BJ (cell line): ENCODE measurements at regions of chr2 and their contacts with region 1.

Region 1: GRCh38 chr2:1817256-1818051 is 73.1 kb upstream of the PXDN start:
- DNase-seq: peak; percentile 97
- H3K4me3 ChIP-seq: no peak overlapping the region
- H3K27me3 ChIP-seq: no peaks in the 10 kb centered on the region
- CTCF ChIP-seq: peak; percentile 99

Region 2: GRCh38 chr2:1730015-1730927 is 87.2 kb before region 1 on chr2:
- CTCF ChIA-PET with region 1: interaction called, 14 read pairs
- POLR2A ChIA-PET with region 1: interaction called, 3 read pairs
- DNase-seq: peak; percentile 83
- H3K4me3 ChIP-seq: no peak overlapping the region
- H3K27me3 ChIP-seq: no peaks in the 10 kb centered on the region
- CTCF ChIP-seq: no peak

Region 3: DNA sequence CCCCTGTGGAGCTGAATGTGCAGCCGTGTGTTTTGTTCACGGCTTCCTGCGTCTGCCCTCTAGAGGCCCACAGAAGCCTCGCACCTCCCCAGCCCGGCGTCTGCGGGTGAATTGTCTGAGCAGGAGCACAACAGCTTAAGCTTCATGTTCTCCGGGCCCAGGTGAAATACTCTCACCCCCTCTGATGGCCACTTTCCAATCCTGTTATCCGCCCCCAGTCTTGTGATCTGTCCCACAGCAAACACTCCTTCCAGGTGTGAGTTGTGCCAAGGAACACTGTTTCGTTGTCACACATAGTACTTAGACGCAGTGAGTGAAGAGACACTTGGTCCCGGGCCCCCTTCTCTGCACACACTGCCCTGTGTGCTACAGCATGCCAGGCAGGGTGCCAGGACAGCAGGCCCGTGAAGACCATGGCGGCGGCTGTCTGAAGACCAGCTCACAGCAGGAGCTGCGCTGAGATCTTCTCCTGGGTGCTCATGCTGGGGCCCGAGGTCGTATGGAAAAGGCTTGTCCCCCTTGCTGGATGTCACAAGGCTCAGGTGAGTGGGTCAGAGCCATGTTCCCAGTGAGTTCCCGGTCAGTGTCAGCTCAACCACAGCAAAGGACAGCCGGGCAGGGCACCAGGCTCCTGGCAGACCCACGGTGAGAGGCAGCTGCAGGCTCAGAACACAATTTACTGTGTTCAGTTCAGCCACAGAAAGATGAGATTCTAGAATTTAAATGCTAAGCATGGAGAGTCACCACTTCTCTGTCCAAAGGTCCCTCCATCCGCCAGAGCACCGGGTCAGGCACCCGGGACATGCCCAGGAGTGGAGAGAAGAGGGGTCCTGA is 66.3 kb before region 1 on chr2:
- CTCF ChIA-PET with region 1: interaction called, 24 read pairs
- POLR2A ChIA-PET with region 1: no interaction called
- DNase-seq: no peak
- H3K4me3 ChIP-seq: no peak overlapping the region
- H3K27me3 ChIP-seq: no peaks in the 10 kb centered on the region
- CTCF ChIP-seq: peak; percentile 98

Region 4: GRCh38 chr2:1804351-1804771 is 13.1 kb before region 1 on chr2:
- CTCF ChIA-PET with region 1: interaction called, 15 read pairs
- POLR2A ChIA-PET with region 1: no interaction called
- DNase-seq: no peak
- H3K4me3 ChIP-seq: no peak overlapping the region
- H3K27me3 ChIP-seq: peaks cover 2% of the 10 kb centered on the region; the same call in 1 of the 2 replicates
- CTCF ChIP-seq: no peak

Region 5: DNA sequence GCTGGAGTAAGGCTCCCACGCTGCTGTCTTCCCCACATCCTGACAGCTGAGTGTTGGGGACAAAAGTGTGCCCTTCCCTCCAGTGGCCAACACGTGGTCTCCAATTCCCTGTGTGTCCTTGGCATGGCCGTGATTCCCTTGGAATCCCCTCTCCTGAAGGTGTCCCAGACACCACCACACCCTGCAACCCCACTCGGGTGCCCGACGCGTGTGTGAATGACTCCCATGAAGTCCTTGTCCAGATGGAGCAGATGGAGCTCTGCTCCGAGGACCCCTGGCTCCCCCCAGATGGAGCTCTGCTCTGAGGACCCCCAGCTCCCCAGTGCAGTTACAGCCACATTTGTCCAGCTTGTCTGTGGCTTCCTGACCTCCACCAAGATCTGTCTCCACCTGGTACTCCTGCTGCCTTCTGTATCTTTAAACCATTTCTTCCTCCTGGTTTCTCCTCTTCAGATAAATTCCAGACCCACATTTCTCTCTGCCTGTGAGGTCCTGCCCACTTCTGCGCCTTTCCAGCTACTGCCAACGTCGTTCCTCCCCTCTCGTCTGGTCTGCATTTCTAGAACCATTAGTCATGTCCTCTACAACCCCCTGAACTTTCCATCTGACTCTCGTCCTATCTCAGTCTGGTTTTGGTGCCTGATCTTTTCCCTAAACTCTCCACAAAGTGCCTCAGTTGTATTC is 13.6 kb after region 1 on chr2:
- CTCF ChIA-PET with region 1: interaction called, 13 read pairs
- POLR2A ChIA-PET with region 1: no interaction called
- DNase-seq: no peak
- H3K4me3 ChIP-seq: no peak overlapping the region
- H3K27me3 ChIP-seq: no peaks in the 10 kb centered on the region; the same call in none of the 2 replicates
- CTCF ChIP-seq: no peak

Region 6: GRCh38 chr2:2101924-2102323 is 284.5 kb after region 1 on chr2:
- CTCF ChIA-PET with region 1: no interaction called
- POLR2A ChIA-PET with region 1: no interaction called
- DNase-seq: no peak
- H3K4me3 ChIP-seq: no peak overlapping the region
- H3K27me3 ChIP-seq: no peaks in the 10 kb centered on the region
- CTCF ChIP-seq: 0 out of 2 replicates have a peak, but pooled peaks have one; percentile 12